Activated CD8-positive, alpha-beta memory T cell treated with anti-CD3 and anti-CD28 coated beads, Interleukin-2, amount 10 ng/mL, durations not matched to agents 7 days and 5 days (primary cell): ENCODE measurements at regions of chr9 and their contacts with region 1.

Region 1: DNA sequence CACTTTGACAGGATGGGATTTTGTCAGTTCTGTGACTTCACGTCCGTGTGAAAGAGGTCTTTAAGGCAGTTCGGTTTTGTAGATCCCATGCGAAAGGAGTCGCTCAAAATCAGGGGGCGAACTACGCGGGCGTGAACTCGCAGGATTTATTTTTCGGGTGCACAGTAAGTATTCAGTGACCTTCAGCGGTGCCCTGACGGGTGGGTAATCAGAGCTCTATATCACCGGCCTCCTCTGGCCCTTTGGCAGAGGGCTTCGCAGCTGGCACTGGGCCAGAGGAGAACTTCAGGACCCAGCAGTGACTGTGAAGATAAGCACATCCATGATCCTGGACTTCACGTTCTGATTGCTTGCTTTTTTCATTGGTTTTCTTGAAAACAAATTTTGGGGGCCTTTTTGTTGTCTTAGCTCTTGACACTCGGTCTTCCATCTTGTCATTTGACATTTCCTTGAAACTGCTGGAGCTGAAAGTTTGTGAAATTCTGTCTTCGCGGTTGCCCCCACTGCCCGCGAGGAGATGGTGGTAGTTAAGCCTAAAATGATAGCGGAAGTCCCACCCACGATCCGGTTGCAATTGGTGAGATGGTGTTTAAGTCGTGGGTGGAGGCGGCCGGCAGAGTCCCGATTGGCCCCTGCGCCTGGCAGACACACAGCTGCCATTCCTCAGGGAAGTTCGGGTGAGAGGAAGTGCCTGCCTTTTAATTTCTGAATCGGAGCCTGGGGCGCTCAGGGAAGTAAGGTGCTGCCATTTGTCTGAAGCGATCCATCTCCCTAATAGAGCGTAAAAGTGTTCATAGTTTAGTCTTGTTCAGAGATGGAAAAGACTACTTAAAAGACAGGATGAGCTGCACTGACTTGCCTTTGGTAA is at the start of gene FAM120AOS:
- DNase-seq: peak; percentile 93
- ATAC-seq: peak; percentile 77
- H3K4me3 Mint-ChIP-seq: peak within 1 kb of the TSS; percentile 86
- H3K27ac Mint-ChIP-seq: peak within 1 kb of the TSS; percentile 93
- H3K4me1 Mint-ChIP-seq: peaks cover 52% of the 10 kb centered on the region
- H3K27me3 Mint-ChIP-seq: no peaks in the 10 kb centered on the region
- total RNA-seq, gene FAM120AOS: 36.2 to 41.2 TPM

Region 2: DNA sequence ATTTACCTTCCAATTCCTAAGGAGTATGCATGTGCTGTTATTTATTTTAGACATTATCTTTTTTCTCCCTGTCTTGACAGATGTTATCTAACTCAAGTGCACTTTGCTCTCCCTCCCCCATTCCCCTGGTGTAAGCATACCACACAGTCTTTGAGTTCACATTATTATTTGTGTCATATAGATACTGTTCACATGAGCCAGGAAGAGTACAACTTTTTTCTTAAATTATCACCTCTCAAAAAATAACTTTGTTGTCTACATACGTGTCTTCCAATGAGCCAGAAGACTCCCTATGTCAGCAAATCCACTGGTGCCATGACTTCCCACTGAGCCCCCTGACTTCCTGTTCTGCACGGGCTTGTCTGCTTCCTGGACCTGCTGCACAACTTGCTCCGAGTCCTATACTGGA is 21.7 kb before region 1 on chr9:
- CTCF ChIA-PET with region 1: no interaction called
- DNase-seq: no peak
- ATAC-seq: no peak
- H3K4me3 Mint-ChIP-seq: no peak overlapping the region
- H3K27ac Mint-ChIP-seq: no peak overlapping the region
- H3K4me1 Mint-ChIP-seq: peaks cover 3% of the 10 kb centered on the region
- H3K27me3 Mint-ChIP-seq: peaks cover 11% of the 10 kb centered on the region

Region 3: DNA sequence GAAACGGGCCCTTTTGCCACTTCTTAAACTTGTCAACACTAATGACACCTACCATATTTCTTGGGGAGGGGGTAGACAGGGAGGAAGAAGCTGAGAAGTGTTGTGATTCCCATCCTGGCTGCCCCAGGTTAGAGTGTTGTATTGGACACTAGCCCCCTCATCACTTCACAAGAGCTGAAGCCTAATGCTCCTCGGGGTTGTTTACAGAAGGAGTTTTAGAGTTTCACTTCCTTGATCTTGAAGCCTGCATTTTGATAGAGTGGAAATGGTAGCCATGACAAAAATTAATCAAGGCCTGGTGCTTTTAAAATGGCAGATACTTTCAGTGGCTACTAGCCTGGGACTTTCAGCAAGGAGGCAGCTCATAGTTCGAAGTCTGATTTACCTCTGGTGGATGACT is 11.1 kb after region 1 on chr9:
- CTCF ChIA-PET with region 1: interaction called, 28 read pairs
- DNase-seq: no peak
- ATAC-seq: peak; percentile 14
- H3K4me3 Mint-ChIP-seq: peak overlapping the region; percentile 50
- H3K27ac Mint-ChIP-seq: peak overlapping the region; percentile 92
- H3K4me1 Mint-ChIP-seq: peaks cover 84% of the 10 kb centered on the region
- H3K27me3 Mint-ChIP-seq: no peaks in the 10 kb centered on the region